Activated B cell treated with CpG ODN at 0.5 μM for 24 hours (primary cell): ENCODE measurements at regions of chr11 and their contacts with region 1.

Region 1: GRCh38 chr11:65314501-65315203 is at the start of gene CDC42EP2:
- DNase-seq: peak; percentile 79
- ATAC-seq: peak; percentile 95
- H3K4me3 Mint-ChIP-seq: peak within 1 kb of the TSS; percentile 83
- H3K27ac Mint-ChIP-seq: no peak within 1 kb of the TSS
- H3K4me1 Mint-ChIP-seq: peaks cover 5% of the 10 kb centered on the region
- H3K27me3 Mint-ChIP-seq: peaks cover 8% of the 10 kb centered on the region
- CTCF ChIP-seq: no peak
- total RNA-seq, gene CDC42EP2: 0.18 and 0.83 TPM in 2 replicates

Region 2: DNA sequence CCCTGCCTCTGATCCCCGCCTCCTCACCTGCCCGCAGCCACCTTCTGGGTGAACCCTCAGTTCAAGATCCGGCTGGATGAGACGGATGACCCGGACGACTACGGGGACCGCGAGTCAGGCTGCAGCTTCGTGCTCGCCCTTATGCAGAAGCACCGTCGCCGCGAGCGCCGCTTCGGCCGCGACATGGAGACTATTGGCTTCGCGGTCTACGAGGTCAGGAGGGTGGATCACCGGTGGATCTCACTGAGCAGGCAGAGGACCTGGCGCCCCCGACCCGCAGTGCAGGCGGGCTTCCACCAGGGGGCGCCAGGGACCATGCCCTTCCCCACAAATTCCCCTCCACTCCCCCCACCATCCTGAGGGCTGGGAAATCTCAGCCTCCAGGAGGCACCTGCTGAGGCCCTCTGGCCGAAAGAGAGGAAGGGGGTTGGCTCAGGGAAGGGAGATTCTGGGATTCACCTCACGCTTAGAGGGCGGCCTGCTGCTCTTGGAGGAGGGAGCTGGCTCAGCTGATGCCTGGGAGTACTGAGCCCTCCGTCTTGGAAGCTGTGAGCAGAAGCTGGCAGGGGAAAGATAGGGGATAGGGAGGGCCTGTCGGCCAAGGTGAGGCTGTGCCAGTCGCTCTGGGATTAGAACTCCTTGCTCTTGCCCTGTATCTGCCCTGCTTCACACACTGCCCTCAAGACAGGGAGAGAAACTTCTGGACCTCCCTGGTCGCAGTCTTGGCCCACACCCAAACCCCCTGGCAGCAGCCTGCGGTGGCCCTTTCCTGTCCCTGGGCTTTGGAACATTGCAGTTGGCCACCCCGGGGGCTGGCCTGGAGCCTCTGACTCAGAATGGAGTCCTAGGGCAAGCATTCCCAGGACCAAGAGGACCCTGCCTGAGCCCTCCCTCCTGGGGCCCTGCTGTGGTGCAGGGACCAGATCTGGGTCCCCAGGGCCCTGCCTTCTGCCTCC is 109.7 kb before region 1 on chr11:
- CTCF ChIA-PET with region 1: interaction called, 6 read pairs
- POLR2A ChIA-PET with region 1: no interaction called
- intact Hi-C with region 1: loop called (anchors 1 kb)
- DNase-seq: peak; percentile 59
- ATAC-seq: peak; percentile 73
- H3K4me3 Mint-ChIP-seq: no peak overlapping the region
- H3K27ac Mint-ChIP-seq: no peak overlapping the region
- H3K4me1 Mint-ChIP-seq: peaks cover 3% of the 10 kb centered on the region
- H3K27me3 Mint-ChIP-seq: no peaks in the 10 kb centered on the region
- CTCF ChIP-seq: peak; percentile 66

Region 3: DNA sequence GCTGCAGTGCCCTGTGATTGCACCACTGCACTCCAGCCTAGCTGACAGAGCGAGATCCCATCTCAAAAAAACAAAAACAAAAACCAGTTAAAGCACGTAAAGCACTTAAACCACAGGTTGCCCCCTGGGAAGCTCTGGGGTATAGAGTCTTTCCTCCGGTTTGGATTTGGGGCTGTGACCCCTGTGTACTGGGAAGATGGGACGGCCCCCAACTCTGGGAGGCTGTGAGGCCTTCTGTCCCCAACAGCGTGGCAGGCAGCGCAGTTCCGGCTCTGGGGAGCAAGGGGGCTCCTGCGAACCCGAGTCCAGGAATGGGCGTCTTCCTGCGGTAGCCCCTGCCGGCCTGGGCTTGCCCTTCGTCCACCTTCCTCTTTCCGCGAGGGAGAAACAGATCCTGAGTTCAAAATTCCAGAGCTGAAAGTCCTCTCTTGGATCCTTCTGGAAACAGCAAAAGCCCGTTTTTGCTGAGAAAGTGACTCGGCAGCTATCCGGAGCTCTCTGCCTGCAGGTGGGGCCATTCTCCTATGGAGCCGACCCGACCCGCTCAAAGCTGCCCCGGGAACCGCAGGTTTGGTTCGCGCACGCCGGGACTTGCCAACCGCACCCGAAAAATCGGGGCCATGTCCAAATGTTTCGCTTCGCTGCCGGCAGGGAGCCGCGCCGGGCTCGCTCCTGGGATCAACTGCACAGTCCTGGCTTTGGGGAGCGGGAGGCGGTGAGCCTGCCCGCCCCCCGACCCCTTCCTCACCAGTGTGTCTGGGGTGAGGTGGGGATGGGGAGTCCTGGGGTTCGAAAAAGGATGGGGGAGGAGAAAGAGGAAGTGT is 89.2 kb before region 1 on chr11:
- CTCF ChIA-PET with region 1: interaction called, 45 read pairs
- POLR2A ChIA-PET with region 1: interaction called, 5 read pairs
- intact Hi-C with region 1: loop called (anchors 1 kb)
- DNase-seq: peak; percentile 49
- ATAC-seq: peak; percentile 89
- H3K4me3 Mint-ChIP-seq: peak overlapping the region; percentile 83
- H3K27ac Mint-ChIP-seq: peak overlapping the region; percentile 24
- H3K4me1 Mint-ChIP-seq: peaks cover 17% of the 10 kb centered on the region
- H3K27me3 Mint-ChIP-seq: no peaks in the 10 kb centered on the region
- CTCF ChIP-seq: no peak

Region 4: GRCh38 chr11:65354265-65355012 is 39.8 kb after region 1 on chr11 and contains the start of gene TIGD3:
- CTCF ChIA-PET with region 1: interaction called, 3 read pairs
- POLR2A ChIA-PET with region 1: no interaction called
- intact Hi-C with region 1: loop called (anchors 1 kb)
- DNase-seq: peak; percentile 96
- ATAC-seq: peak; percentile 97
- H3K4me3 Mint-ChIP-seq: peak within 1 kb of the TSS; percentile 91
- H3K27ac Mint-ChIP-seq: peak within 1 kb of the TSS; percentile 83
- H3K4me1 Mint-ChIP-seq: peaks cover 23% of the 10 kb centered on the region
- H3K27me3 Mint-ChIP-seq: no peaks in the 10 kb centered on the region
- CTCF ChIP-seq: no peak
- total RNA-seq, gene TIGD3: 1.4 and 1.6 TPM in 2 replicates

Region 5: GRCh38 chr11:66157179-66157864 is 842.7 kb after region 1 on chr11:
- CTCF ChIA-PET with region 1: no interaction called
- POLR2A ChIA-PET with region 1: no interaction called
- intact Hi-C with region 1: no loop called
- DNase-seq: no peak
- ATAC-seq: peak; percentile 40
- H3K4me3 Mint-ChIP-seq: no peak overlapping the region
- H3K27ac Mint-ChIP-seq: no peak overlapping the region
- H3K4me1 Mint-ChIP-seq: peaks cover 26% of the 10 kb centered on the region
- H3K27me3 Mint-ChIP-seq: no peaks in the 10 kb centered on the region
- CTCF ChIP-seq: no peak